OCI-LY7 (cell line): ENCODE measurements at regions of chr1 and their contacts with region 1.

Region 1: DNA sequence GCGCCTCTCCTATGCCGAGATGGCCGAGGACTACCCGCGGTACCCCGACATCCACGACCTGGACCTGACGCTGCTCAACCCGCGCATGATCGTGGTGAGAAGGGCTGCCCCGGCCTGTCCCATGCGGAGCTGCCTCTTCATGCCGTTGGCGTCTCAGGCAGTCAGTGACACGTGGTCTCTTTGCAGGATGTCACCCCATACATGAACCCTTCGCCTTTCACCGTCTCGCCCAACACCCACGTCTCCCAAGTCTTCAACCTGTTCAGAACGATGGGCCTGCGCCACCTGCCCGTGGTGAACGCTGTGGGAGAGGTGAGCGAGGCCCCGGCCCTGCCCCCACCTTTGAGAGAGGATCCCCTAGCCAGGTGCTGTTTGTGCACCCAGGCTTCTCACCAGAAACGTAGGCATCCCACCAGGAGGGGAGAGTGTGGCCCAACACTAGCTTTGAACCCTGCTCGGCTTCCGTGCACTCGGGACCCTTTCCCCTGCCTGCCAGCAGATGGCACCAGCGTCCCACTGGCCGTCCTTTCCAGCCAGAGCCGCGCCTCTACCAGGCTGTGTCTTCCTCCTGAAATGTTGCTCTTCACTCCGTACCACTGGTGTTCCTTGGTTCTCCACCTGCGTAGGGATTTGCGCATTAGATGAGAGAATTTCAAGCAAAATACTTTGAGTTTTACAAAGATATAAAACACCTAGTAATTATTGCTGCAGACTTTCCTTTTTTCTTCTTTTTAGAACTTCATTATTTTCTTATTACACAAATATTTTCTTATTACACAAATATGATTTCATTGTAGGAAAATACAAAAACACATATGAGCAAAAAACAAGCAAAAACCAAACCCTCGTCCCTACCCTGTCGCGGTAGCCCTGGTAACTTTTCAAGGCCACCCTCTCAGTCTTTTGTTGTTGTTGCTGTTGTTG is 9.0 kb downstream of the NPPA start:
- DNase-seq: peak; percentile 71
- H3K4me3 ChIP-seq: no peak overlapping the region
- H3K27ac ChIP-seq: no peak overlapping the region
- H3K4me1 ChIP-seq: peaks cover 24% of the 10 kb centered on the region
- CTCF ChIP-seq: peak; percentile 99

Region 2: DNA sequence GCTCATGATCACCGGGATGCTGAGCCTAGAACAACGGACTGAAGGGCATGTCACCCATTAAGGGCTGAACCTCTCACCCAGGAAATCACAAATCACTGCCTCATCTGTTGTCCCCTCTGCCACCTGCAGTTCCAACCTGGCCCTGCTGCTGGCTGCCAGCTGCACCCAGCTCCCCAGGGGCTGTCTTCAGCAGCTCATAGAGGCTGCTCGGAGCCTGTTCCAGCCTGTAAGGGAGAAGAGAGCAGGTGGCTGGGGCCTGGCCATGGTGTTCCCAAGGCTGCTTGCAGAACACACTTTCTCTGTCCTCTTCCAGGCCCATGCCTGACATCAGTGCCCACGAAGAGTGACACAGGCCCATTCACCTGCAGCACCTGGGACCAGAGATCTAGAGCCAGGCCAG is 404.1 kb before region 1 on chr1:
- CTCF ChIA-PET with region 1: no interaction called
- POLR2A ChIA-PET with region 1: no interaction called
- intact Hi-C with region 1: no loop called
- DNase-seq: peak; percentile 51
- H3K4me3 ChIP-seq: no peak overlapping the region
- H3K27ac ChIP-seq: no peak overlapping the region
- H3K4me1 ChIP-seq: no peaks in the 10 kb centered on the region
- CTCF ChIP-seq: no peak

Region 3: DNA sequence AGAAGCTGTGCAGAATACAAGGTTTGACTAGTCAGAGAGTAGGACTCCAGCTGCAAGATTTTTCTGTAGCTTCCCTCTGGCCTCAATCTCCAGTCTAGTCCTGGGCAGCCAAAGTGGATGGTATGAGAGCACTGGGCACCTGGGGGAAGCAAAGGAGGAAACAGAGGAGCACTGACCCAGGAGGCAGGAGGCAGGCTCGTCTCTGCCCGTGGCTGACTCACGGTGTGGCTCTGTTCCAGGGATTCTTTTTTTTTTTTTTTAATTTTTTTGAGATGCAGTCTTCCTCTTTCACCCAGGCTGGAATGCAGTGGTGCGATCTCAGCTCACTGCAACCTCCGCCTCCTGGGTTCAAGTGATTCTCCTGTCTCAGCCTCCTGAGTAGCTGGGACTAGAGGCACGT is 24.3 kb after region 1 on chr1:
- CTCF ChIA-PET with region 1: no interaction called
- POLR2A ChIA-PET with region 1: no interaction called
- intact Hi-C with region 1: loop called (anchors 2 kb)
- DNase-seq: no peak
- H3K4me3 ChIP-seq: no peak overlapping the region
- H3K27ac ChIP-seq: no peak overlapping the region
- H3K4me1 ChIP-seq: peaks cover 16% of the 10 kb centered on the region
- CTCF ChIP-seq: no peak

Region 4: DNA sequence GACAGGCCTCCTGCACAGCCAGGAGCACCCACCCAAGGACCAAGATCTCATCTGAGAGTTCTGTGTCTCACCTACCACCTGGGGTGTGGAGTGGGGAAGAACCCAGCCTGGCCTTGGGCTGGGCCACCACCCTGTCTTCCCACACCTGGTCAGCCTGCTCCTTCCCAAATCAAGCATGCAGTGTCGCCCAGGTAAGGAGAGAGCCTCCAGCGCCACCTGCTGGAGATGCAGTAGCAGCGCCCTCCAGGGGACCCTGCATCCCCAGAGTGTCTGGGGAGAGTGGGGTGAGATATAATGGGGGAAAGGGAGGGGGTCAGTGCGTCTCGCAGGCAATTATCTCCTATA is 55.3 kb after region 1 on chr1:
- CTCF ChIA-PET with region 1: interaction called, 6 read pairs
- POLR2A ChIA-PET with region 1: interaction called, 3 read pairs
- intact Hi-C with region 1: loop called (anchors 1 kb)
- DNase-seq: peak; percentile 76
- H3K4me3 ChIP-seq: no peak overlapping the region
- H3K27ac ChIP-seq: no peak overlapping the region
- H3K4me1 ChIP-seq: no peaks in the 10 kb centered on the region
- CTCF ChIP-seq: peak; percentile 96

Region 5: DNA sequence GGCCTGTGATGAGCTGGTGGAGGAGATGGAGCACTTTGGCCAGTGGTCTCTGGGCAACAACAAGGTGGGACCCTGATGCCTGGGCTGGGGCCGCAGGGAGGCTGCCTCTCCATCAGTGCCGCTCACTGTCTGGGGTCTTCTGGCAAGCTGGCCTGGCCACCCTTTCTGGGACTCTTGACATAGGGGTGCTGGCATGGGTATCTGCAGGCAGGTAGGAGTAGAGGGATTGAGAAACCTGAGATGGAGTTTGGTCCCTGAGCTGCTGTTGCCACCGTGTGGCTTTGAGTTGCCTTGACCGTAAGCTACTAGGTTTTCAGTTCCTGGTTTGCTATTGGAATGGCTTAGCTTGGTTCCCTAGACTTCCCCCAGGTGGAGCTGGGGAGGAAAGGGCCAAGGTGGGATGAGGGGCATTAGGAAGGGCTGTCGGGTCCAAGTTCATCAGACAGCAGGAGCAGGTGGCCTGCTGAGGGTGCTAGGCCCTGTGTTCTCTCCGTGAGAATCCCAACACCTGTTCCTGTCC is 128.5 kb after region 1 on chr1:
- CTCF ChIA-PET with region 1: interaction called, 3 read pairs
- POLR2A ChIA-PET with region 1: interaction called, 5 read pairs
- intact Hi-C with region 1: loop called (anchors 1 kb)
- DNase-seq: peak; percentile 83
- H3K4me3 ChIP-seq: no peak overlapping the region
- H3K27ac ChIP-seq: no peak overlapping the region
- H3K4me1 ChIP-seq: no peaks in the 10 kb centered on the region
- CTCF ChIP-seq: peak; percentile 87